Activated CD4-positive, alpha-beta T cell treated with anti-CD3 and anti-CD28 coated beads, Interleukin-2, amount 10 ng/mL, durations not matched to agents 24 days and 14 days (primary cell): ENCODE measurements at regions of chr18 and their contacts with region 1.

Region 1: GRCh38 chr18:59402432-59403090 is 43.5 kb upstream of the LMAN1 start:
- DNase-seq: peak; percentile 92
- H3K4me3 Mint-ChIP-seq: no peak overlapping the region
- H3K27ac Mint-ChIP-seq: no peak overlapping the region
- H3K4me1 Mint-ChIP-seq: peaks cover 4% of the 10 kb centered on the region
- H3K27me3 Mint-ChIP-seq: peaks cover 11% of the 10 kb centered on the region

Region 2: DNA sequence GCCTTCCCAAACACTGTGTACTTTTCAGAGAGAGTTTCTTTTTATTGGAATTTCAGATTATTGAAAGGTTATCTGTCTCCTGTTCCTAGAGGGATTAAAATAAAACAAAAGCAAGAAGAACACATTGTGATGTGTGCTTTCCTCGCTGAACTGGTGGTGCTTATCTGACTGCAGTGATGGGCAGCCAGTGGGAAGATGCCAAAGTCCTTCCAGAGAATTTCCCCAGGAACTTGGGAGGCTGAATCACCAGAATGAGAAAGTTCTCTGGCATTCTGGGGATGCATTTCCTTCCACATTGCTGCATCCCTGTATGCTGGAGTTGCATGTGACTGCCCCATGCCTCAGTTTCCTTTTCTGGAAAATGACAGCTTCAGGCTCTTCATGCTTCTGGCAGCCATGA is 316.8 kb before region 1 on chr18:
- intact Hi-C with region 1: loop called (anchors 2 kb)
- DNase-seq: no peak
- H3K4me3 Mint-ChIP-seq: no peak overlapping the region
- H3K27ac Mint-ChIP-seq: no peak overlapping the region
- H3K4me1 Mint-ChIP-seq: peaks cover 5% of the 10 kb centered on the region
- H3K27me3 Mint-ChIP-seq: peaks cover 14% of the 10 kb centered on the region

Region 3: GRCh38 chr18:59249205-59249774 is 153.3 kb before region 1 on chr18:
- intact Hi-C with region 1: loop called (anchors 2 kb)
- DNase-seq: peak; percentile 80
- H3K4me3 Mint-ChIP-seq: no peak overlapping the region
- H3K27ac Mint-ChIP-seq: no peak overlapping the region
- H3K4me1 Mint-ChIP-seq: peaks cover 1% of the 10 kb centered on the region
- H3K27me3 Mint-ChIP-seq: peaks cover 47% of the 10 kb centered on the region

Region 4: GRCh38 chr18:59308248-59308937 is 94.2 kb before region 1 on chr18:
- intact Hi-C with region 1: loop called (anchors 2 kb)
- DNase-seq: peak; percentile 93
- H3K4me3 Mint-ChIP-seq: peak overlapping the region; percentile 73
- H3K27ac Mint-ChIP-seq: no peak overlapping the region
- H3K4me1 Mint-ChIP-seq: no peaks in the 10 kb centered on the region
- H3K27me3 Mint-ChIP-seq: peaks cover 56% of the 10 kb centered on the region

Region 5: DNA sequence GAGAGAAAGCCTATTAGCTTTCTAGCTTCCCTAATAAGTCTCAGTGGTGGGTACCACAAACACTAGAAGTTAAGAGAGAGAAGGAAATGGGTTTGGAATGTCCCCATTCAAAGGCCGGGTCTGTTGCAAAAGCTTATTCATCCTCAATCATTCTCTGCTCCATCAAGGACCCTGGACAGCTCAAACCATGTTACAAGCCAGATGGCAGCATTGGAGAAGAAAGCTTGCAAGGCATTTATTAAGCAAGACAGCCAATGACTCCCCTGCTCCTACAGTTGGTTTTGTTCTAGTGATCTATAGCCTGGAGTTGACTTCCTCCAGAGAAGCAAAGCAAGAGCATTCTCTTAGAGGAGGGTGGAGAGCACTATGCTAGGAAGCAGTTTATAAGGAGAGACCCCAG is 43.5 kb after region 1 on chr18:
- intact Hi-C with region 1: no loop called
- DNase-seq: no peak
- H3K4me3 Mint-ChIP-seq: no peak overlapping the region
- H3K27ac Mint-ChIP-seq: no peak overlapping the region
- H3K4me1 Mint-ChIP-seq: no peaks in the 10 kb centered on the region
- H3K27me3 Mint-ChIP-seq: no peaks in the 10 kb centered on the region